ENCODE measurements at regions of chr1 and their contacts with region 1.

Region 1: GRCh38 chr1:67214420-67215174 is 48.3 kb downstream of the IL23R start:
- DNase-seq: peak; percentile 19
- ATAC-seq: peak; percentile 65
- H3K4me3 ChIP-seq: no peak overlapping the region
- H3K27ac ChIP-seq: no peak overlapping the region
- H3K4me1 ChIP-seq: no peaks in the 10 kb centered on the region
- H3K27me3 ChIP-seq: no peaks in the 10 kb centered on the region
- CTCF ChIP-seq: peak; percentile 53 to 74 (median 74); a peak in 5 of 6 replicates
- POLR2A ChIP-seq: no peak
- RAD21 ChIP-seq: peak; percentile 50

Region 2: GRCh38 chr1:66764994-66765578 is 449.5 kb before region 1 on chr1:
- CTCF ChIA-PET with region 1: interaction called, 17 read pairs
- POLR2A ChIA-PET with region 1: no interaction called
- RAD21 ChIA-PET with region 1: interaction called in 1 of 2 experiments, 3 read pairs
- intact Hi-C with region 1: loop called (anchors 1 kb)
- DNase-seq: peak; percentile 31
- ATAC-seq: peak; percentile 82
- H3K4me3 ChIP-seq: no peak overlapping the region
- H3K27ac ChIP-seq: no peak overlapping the region
- H3K4me1 ChIP-seq: 0 out of 4 replicates have a peak, but pooled peaks cover 0 to 2% of the 10 kb centered on the region in 2 experiments
- H3K27me3 ChIP-seq: no peaks in the 10 kb centered on the region
- CTCF ChIP-seq: peak; percentile 62 to 86 (median 86)
- POLR2A ChIP-seq: no peak
- RAD21 ChIP-seq: peak; percentile 91

Region 3: GRCh38 chr1:66996018-66996682 is 218.4 kb before region 1 on chr1:
- CTCF ChIA-PET with region 1: interaction called, 60 read pairs
- POLR2A ChIA-PET with region 1: interaction called, 4 read pairs
- RAD21 ChIA-PET with region 1: interaction called in 1 of 2 experiments, 7 read pairs
- intact Hi-C with region 1: loop called (anchors 2 kb)
- DNase-seq: peak; percentile 45
- ATAC-seq: peak; percentile 81
- H3K4me3 ChIP-seq: no peak overlapping the region
- H3K27ac ChIP-seq: no peak overlapping the region
- H3K4me1 ChIP-seq: no peaks in the 10 kb centered on the region
- H3K27me3 ChIP-seq: no peaks in the 10 kb centered on the region
- CTCF ChIP-seq: peak; percentile 82 to 96 (median 88)
- POLR2A ChIP-seq: no peak
- RAD21 ChIP-seq: peak; percentile 95

Region 4: GRCh38 chr1:67227196-67227595 is 12.6 kb after region 1 on chr1:
- CTCF ChIA-PET with region 1: interaction called, 34 read pairs
- POLR2A ChIA-PET with region 1: no interaction called
- RAD21 ChIA-PET with region 1: no interaction called
- intact Hi-C with region 1: no loop called
- DNase-seq: no peak
- ATAC-seq: no peak
- H3K4me3 ChIP-seq: no peak overlapping the region
- H3K27ac ChIP-seq: no peak overlapping the region
- H3K4me1 ChIP-seq: no peaks in the 10 kb centered on the region
- H3K27me3 ChIP-seq: no peaks in the 10 kb centered on the region
- CTCF ChIP-seq: no peak
- POLR2A ChIP-seq: no peak
- RAD21 ChIP-seq: no peak

Region 5: DNA sequence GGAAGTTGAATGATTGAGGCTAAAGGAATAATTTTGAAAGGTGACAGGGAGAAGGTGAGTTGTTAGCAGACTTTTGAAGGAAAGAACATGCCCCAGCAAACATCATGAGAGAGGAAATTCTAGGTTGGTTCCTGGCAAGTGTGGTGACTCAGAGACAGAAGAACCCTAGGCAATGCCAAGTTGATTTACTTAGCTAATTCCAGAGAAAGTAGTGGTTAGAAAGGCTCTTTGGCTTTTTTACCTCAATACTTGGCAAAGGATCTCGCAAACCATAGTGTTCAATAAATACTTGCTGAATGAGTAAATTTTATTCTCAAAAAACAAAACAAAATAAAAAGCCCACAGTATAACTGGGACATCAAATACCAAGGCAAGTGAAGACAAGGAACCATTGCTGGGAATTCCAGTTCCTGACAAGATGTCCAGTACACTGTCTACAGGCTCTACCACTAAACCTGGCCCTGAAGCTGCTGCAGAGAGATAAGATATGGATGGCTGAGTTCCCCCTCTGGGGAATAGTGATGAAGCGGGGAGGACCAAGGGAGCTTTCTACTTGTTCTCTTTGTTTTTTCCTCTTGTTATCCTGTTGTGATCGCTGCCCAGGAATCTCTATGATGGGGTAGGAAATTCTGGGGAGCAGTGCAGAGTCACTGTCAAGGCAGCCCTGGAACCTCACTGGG is 141.3 kb after region 1 on chr1:
- CTCF ChIA-PET with region 1: no interaction called
- POLR2A ChIA-PET with region 1: no interaction called
- RAD21 ChIA-PET with region 1: no interaction called
- intact Hi-C with region 1: no loop called
- DNase-seq: no peak
- ATAC-seq: no peak
- H3K4me3 ChIP-seq: no peak overlapping the region
- H3K27ac ChIP-seq: no peak overlapping the region
- H3K4me1 ChIP-seq: no peaks in the 10 kb centered on the region
- H3K27me3 ChIP-seq: no peaks in the 10 kb centered on the region
- CTCF ChIP-seq: no peak
- POLR2A ChIP-seq: no peak
- RAD21 ChIP-seq: no peak

Region 6: GRCh38 chr1:67652800-67653199 is 438.2 kb after region 1 on chr1:
- CTCF ChIA-PET with region 1: no interaction called
- POLR2A ChIA-PET with region 1: no interaction called
- RAD21 ChIA-PET with region 1: no interaction called
- intact Hi-C with region 1: no loop called
- DNase-seq: no peak
- ATAC-seq: no peak
- H3K4me3 ChIP-seq: no peak overlapping the region
- H3K27ac ChIP-seq: no peak overlapping the region
- H3K4me1 ChIP-seq: no peaks in the 10 kb centered on the region
- H3K27me3 ChIP-seq: no peaks in the 10 kb centered on the region
- CTCF ChIP-seq: no peak
- POLR2A ChIP-seq: no peak
- RAD21 ChIP-seq: no peak

Region 7: GRCh38 chr1:67674260-67675011 is 459.8 kb after region 1 on chr1:
- CTCF ChIA-PET with region 1: no interaction called
- POLR2A ChIA-PET with region 1: no interaction called
- RAD21 ChIA-PET with region 1: no interaction called
- intact Hi-C with region 1: no loop called
- DNase-seq: no peak
- ATAC-seq: no peak
- H3K4me3 ChIP-seq: no peak overlapping the region
- H3K27ac ChIP-seq: no peak overlapping the region
- H3K4me1 ChIP-seq: peaks cover 0 to 3% of the 10 kb centered on the region in 2 experiments; a peak in 1 of 4 replicates
- H3K27me3 ChIP-seq: no peaks in the 10 kb centered on the region
- CTCF ChIP-seq: no peak
- POLR2A ChIP-seq: no peak
- RAD21 ChIP-seq: no peak